Common myeloid progenitor, CD34-positive (primary cell): ENCODE measurements at regions of chr9 and their contacts with region 1.

Region 1: GRCh38 chr9:21326526-21327139 is 8.6 kb downstream of the KLHL9 start:
- DNase-seq: peak; percentile 55 to 76 (median 73)
- H3K4me3 ChIP-seq: no peak overlapping the region
- H3K27ac ChIP-seq: no peak overlapping the region
- H3K4me1 ChIP-seq: peaks cover 0 to 20% (median 13%) of the 10 kb centered on the region in 4 experiments
- H3K27me3 ChIP-seq: no peaks in the 10 kb centered on the region

Region 2: DNA sequence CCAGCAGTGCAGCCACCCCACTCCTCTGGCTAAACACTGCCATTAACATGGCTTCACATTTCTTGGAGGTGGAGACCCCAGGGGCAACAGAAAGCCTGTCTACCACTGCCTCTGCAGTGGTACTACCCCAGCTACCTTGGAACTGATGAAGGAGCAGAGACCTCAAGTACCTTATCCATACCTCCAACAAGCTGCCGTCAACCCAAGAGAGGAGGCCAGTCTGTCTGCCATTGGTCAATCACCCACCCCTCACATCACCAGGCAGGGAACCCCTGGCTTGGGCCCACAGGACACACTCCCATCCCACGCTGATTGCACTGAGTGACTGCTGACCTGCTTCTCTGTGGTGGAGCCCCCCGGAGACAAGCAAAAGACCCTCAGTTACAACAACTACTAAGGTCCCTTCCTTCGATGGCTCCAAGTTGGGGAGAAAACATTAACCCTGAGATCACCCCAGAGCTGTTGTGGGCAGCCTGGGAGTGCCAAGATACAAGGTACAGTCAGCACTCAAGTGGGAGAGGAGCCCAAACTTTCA is 92.4 kb before region 1 on chr9:
- CTCF ChIA-PET with region 1: interaction called, 24 read pairs
- POLR2A ChIA-PET with region 1: no interaction called
- DNase-seq: no peak
- H3K4me3 ChIP-seq: no peak overlapping the region
- H3K27ac ChIP-seq: no peak overlapping the region
- H3K4me1 ChIP-seq: peaks cover 0 to 3% (median 0%) of the 10 kb centered on the region in 4 experiments
- H3K27me3 ChIP-seq: no peaks in the 10 kb centered on the region

Region 3: DNA sequence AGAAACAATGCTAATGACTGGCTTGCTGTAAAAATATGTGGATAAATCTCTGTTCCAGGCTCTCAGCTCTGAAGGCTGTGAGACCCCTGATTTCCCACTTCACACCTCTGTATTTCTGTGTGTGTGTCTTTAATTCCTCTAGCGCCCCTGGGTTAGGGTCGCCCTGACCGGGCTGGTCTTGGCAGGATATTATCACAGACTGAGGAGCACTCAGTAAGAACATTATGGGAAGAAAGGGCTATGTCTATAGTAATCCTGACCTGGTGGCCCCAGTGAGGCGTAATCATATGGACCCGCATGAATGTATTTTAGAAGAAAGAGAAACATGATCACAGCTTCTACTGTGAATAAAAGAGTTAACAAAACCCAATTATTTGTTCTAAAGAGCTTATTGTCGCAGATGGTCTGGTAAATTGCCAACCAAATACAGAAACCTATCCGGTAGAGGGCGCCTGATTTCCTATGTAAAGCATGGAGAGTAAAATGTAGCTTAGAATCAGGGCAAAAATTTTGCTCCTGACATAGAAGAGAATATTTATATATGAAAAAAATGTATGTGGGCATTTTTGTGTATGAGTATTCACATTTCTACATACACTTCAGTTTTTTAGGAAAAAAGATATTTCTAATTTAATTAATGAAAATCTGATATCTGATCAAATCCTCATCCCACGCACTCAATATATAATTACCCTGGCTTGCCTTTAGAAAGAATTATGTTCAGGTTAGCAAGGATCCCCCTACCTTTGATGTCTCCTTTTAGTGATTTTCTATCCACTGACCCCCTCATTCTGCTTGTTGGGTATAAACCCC is 107.8 kb after region 1 on chr9:
- CTCF ChIA-PET with region 1: interaction called, 20 read pairs
- POLR2A ChIA-PET with region 1: no interaction called
- DNase-seq: peak; percentile 73 to 87 (median 84)
- H3K4me3 ChIP-seq: no peak overlapping the region
- H3K27ac ChIP-seq: no peak overlapping the region
- H3K4me1 ChIP-seq: peaks cover 0 to 7% (median 4%) of the 10 kb centered on the region in 4 experiments
- H3K27me3 ChIP-seq: no peaks in the 10 kb centered on the region